CD8-positive, alpha-beta T cell (primary cell): ENCODE measurements at regions of chr11 and their contacts with region 1.

Region 1: GRCh38 chr11:98423933-98424332 is 596.8 kb upstream of the CNTN5 start:
- DNase-seq: no peak
- ATAC-seq: no peak
- H3K4me3 ChIP-seq: no peak overlapping the region
- H3K4me3 Mint-ChIP-seq: no peak overlapping the region
- H3K27ac ChIP-seq: no peak overlapping the region
- H3K27ac Mint-ChIP-seq: no peak overlapping the region
- H3K4me1 ChIP-seq: no peaks in the 10 kb centered on the region
- H3K4me1 Mint-ChIP-seq: no peaks in the 10 kb centered on the region
- H3K27me3 ChIP-seq: no peaks in the 10 kb centered on the region
- H3K27me3 Mint-ChIP-seq: no peaks in the 10 kb centered on the region
- CTCF ChIP-seq: no peak

Region 2: GRCh38 chr11:98398508-98398907 is 25.4 kb before region 1 on chr11:
- CTCF ChIA-PET with region 1: no interaction called
- POLR2A ChIA-PET with region 1: no interaction called
- intact Hi-C with region 1: loop called in 1 of 2 experiments (anchors 1 kb)
- DNase-seq: no peak
- ATAC-seq: no peak
- H3K4me3 ChIP-seq: no peak overlapping the region
- H3K4me3 Mint-ChIP-seq: no peak overlapping the region
- H3K27ac ChIP-seq: no peak overlapping the region
- H3K27ac Mint-ChIP-seq: no peak overlapping the region
- H3K4me1 ChIP-seq: no peaks in the 10 kb centered on the region
- H3K4me1 Mint-ChIP-seq: no peaks in the 10 kb centered on the region
- H3K27me3 ChIP-seq: no peaks in the 10 kb centered on the region
- H3K27me3 Mint-ChIP-seq: no peaks in the 10 kb centered on the region
- CTCF ChIP-seq: no peak

Region 3: GRCh38 chr11:98507208-98507607 is 83.3 kb after region 1 on chr11:
- CTCF ChIA-PET with region 1: no interaction called
- POLR2A ChIA-PET with region 1: no interaction called
- intact Hi-C with region 1: no loop called
- DNase-seq: no peak
- ATAC-seq: no peak
- H3K4me3 ChIP-seq: no peak overlapping the region
- H3K4me3 Mint-ChIP-seq: no peak overlapping the region
- H3K27ac ChIP-seq: no peak overlapping the region
- H3K27ac Mint-ChIP-seq: no peak overlapping the region
- H3K4me1 ChIP-seq: no peaks in the 10 kb centered on the region
- H3K4me1 Mint-ChIP-seq: no peaks in the 10 kb centered on the region
- H3K27me3 ChIP-seq: no peaks in the 10 kb centered on the region
- H3K27me3 Mint-ChIP-seq: no peaks in the 10 kb centered on the region
- CTCF ChIP-seq: no peak

Region 4: DNA sequence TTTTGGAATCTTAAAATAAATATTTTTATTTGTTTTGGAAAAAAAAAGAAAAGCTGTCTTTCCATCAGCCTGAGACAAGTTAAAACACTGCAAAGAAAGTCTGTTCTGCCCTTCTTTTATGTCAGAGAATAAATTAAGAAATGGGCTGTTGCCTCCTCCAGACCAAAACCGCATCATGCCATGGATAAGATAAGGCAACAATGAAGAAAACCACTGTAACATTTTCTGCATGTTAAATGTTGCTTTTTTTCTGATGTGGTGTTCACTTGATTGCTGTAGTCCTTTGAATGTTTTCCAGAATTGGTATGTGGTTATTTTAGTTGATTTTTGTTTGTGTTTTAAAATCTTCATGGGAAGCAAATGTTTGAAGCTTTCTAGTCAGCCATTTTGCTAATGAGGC is 277.6 kb after region 1 on chr11:
- CTCF ChIA-PET with region 1: no interaction called
- POLR2A ChIA-PET with region 1: no interaction called
- intact Hi-C with region 1: no loop called
- DNase-seq: no peak
- ATAC-seq: no peak
- H3K4me3 ChIP-seq: no peak overlapping the region
- H3K4me3 Mint-ChIP-seq: no peak overlapping the region
- H3K27ac ChIP-seq: no peak overlapping the region
- H3K27ac Mint-ChIP-seq: no peak overlapping the region
- H3K4me1 ChIP-seq: no peaks in the 10 kb centered on the region
- H3K4me1 Mint-ChIP-seq: no peaks in the 10 kb centered on the region
- H3K27me3 ChIP-seq: no peaks in the 10 kb centered on the region
- H3K27me3 Mint-ChIP-seq: no peaks in the 10 kb centered on the region
- CTCF ChIP-seq: no peak